A549 (cell line): ENCODE measurements at regions of chr11 and their contacts with region 1.

Region 1: GRCh38 chr11:72722050-72722748 is 30.0 kb downstream of the ARAP1 start:
- DNase-seq: peak; percentile 87 to 97
- ATAC-seq: peak; percentile 95 to 97
- H3K4me3 ChIP-seq: peak overlapping the region; percentile 45
- H3K27ac ChIP-seq: peak overlapping the region; percentile 94 to 97
- H3K4me1 ChIP-seq: peaks cover 35% of the 10 kb centered on the region
- CTCF ChIP-seq: no peak
- EP300 ChIP-seq: no peak
- POLR2A ChIP-seq: peak; percentile 54
- RAD21 ChIP-seq: no peak

Region 2: DNA sequence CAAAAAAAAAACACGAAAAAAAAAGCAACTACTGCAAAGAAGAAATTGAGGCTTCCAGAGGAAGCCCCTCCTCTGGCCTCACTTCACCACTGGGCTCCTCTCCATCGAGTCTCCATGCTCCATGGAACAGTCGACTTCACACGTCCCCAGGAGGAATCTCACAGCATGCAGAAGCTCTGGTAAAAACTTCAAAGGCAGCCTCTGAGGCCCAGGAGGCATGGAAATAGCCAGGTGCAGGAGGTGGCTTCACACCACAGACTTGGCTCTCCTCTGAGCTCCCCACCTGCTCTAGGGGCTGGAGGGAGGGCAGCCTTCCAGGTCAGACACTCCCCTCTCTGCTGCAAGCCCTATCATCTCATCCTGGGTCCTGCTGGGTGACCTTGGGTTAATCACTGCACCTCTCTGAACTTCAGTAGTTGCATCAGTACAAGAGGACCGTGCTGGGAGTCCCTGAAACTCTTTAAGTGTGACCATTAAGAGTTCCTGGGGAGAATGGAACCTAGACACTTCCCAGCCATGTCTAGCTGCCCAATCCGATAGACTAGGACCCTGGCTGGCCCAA is 56.2 kb before region 1 on chr11:
- CTCF ChIA-PET with region 1: no interaction called
- POLR2A ChIA-PET with region 1: no interaction called
- DNase-seq: no peak
- ATAC-seq: no peak
- H3K4me3 ChIP-seq: no peak overlapping the region
- H3K27ac ChIP-seq: no peak overlapping the region
- H3K4me1 ChIP-seq: no peaks in the 10 kb centered on the region
- CTCF ChIP-seq: no peak
- EP300 ChIP-seq: no peak
- POLR2A ChIP-seq: no peak
- RAD21 ChIP-seq: no peak

Region 3: GRCh38 chr11:72683782-72684200 is 38.4 kb before region 1 on chr11:
- CTCF ChIA-PET with region 1: interaction called, 25 read pairs
- POLR2A ChIA-PET with region 1: no interaction called
- DNase-seq: peak; percentile 42 to 85
- ATAC-seq: peak; percentile 57 to 85
- H3K4me3 ChIP-seq: no peak overlapping the region
- H3K27ac ChIP-seq: no peak overlapping the region
- H3K4me1 ChIP-seq: peaks cover 9% of the 10 kb centered on the region; the same call in 2 of the 3 replicates
- CTCF ChIP-seq: peak; percentile 83
- EP300 ChIP-seq: no peak
- POLR2A ChIP-seq: no peak
- RAD21 ChIP-seq: peak; percentile 82 to 87

Region 4: GRCh38 chr11:72758690-72759389 is 36.6 kb after region 1 on chr11:
- CTCF ChIA-PET with region 1: interaction called, 10 read pairs
- POLR2A ChIA-PET with region 1: no interaction called
- DNase-seq: no peak
- ATAC-seq: peak; percentile 31 to 42; a peak in 4 of 6 replicates
- H3K4me3 ChIP-seq: no peak overlapping the region
- H3K27ac ChIP-seq: peak overlapping the region; percentile 9 to 75; a peak in 3 of 6 replicates
- H3K4me1 ChIP-seq: peaks cover 19% of the 10 kb centered on the region
- CTCF ChIP-seq: no peak
- EP300 ChIP-seq: no peak
- POLR2A ChIP-seq: no peak
- RAD21 ChIP-seq: no peak

Region 5: DNA sequence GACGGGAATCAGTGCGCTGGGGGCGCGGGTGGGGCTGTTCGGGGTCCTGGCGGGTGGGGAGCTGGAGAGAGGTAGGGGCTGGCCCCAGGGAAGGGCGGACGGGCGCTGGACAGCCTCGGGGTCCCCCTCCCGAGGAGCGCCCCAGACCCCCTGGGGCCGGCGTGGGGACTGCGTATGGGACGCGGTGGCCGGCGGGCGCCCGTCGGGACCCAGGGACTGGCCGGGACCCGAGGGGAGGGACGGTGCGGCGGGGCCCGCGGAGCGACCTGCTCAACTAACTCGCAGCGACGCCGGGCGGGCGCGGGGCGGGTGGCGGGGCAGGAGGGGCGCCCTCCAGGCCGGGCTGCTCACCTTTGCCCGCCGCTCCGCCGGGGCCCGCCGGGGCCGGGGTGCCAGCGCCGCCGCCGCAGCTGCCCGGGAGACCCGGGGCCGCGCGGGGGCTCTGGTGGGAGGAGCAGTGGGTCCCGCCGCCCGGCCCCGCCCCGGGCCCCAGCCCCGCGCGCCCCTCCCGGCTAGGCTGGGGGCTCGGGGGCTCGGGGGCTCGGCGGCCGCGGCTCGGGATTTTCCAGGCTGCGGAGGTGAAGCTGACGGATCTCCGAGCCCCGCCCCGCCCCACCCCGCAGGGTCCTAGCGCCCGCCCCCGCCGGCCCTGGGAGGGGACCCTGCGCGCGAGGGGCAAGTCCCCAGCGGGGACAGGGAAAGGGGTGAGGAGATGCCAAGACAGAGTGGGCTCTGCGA is 59.3 kb after region 1 on chr11:
- CTCF ChIA-PET with region 1: interaction called, 14 read pairs
- POLR2A ChIA-PET with region 1: no interaction called
- DNase-seq: peak in 1 of 2 experiments; percentile 77
- ATAC-seq: peak; percentile 60 to 63; a peak in 5 of 6 replicates
- H3K4me3 ChIP-seq: peak overlapping the region; percentile 59
- H3K27ac ChIP-seq: peak overlapping the region; percentile 61 to 94
- H3K4me1 ChIP-seq: peaks cover 36% of the 10 kb centered on the region
- CTCF ChIP-seq: no peak
- EP300 ChIP-seq: no peak
- POLR2A ChIP-seq: no peak
- RAD21 ChIP-seq: no peak

Region 6: DNA sequence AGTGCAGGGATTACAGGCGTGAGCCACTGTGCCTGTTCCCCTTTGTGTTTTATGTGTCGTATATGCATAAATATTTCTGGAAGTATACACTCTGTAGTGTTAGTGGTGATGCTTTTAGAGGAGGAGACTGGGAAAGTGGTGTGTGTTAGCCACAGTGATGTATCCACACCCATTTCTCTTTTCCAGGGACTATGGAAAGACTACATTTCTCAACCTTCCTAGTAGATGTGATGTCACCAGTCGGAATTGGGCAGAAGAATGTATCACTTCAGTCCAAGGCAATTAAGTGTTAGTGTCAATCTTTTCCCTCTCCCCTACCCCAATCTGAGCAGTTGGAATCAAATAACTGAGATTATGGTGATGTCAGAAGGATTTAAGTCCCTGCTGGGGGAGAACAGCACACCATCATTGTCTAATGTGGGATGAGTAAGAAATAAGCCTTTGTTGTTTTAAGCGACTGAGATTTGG is 86.2 kb after region 1 on chr11:
- CTCF ChIA-PET with region 1: interaction called, 28 read pairs
- POLR2A ChIA-PET with region 1: interaction called, 10 read pairs
- DNase-seq: no peak
- ATAC-seq: no peak
- H3K4me3 ChIP-seq: no peak overlapping the region
- H3K27ac ChIP-seq: peak overlapping the region; percentile 80 to 89
- H3K4me1 ChIP-seq: peaks cover 45% of the 10 kb centered on the region
- CTCF ChIP-seq: no peak
- EP300 ChIP-seq: no peak
- POLR2A ChIP-seq: no peak
- RAD21 ChIP-seq: no peak

Region 7: GRCh38 chr11:72831513-72832300 is 109.5 kb after region 1 on chr11:
- CTCF ChIA-PET with region 1: interaction called, 58 read pairs
- POLR2A ChIA-PET with region 1: no interaction called
- DNase-seq: peak; percentile 74 to 77
- ATAC-seq: peak; percentile 93 to 96
- H3K4me3 ChIP-seq: no peak overlapping the region
- H3K27ac ChIP-seq: peak overlapping the region; percentile 32 to 75; a peak in 4 of 6 replicates
- H3K4me1 ChIP-seq: peaks cover 4% of the 10 kb centered on the region; the same call in 2 of the 3 replicates
- CTCF ChIP-seq: peak; percentile 90
- EP300 ChIP-seq: no peak
- POLR2A ChIP-seq: no peak
- RAD21 ChIP-seq: peak; percentile 95 to 97

Region 8: DNA sequence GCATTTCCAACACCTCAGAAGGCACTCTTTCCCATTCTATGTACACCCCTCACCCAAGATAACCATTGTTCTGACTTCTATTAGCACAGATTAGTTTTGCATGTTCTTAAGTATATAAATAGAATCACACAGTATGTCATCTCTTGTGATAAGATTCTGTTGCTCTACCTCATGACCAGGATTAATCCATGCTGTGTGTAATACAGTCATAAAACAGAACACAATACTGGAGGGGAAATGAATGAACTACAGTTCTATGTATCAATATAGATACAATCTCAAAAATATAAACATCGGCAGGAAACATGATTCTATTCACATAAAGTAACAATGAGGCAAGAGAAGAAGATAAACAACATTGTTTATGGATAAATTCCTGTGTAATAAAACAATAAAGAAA is 243.5 kb after region 1 on chr11:
- CTCF ChIA-PET with region 1: no interaction called
- POLR2A ChIA-PET with region 1: no interaction called
- DNase-seq: no peak
- ATAC-seq: no peak
- H3K4me3 ChIP-seq: no peak overlapping the region
- H3K27ac ChIP-seq: no peak overlapping the region
- H3K4me1 ChIP-seq: peaks cover 15% of the 10 kb centered on the region; the same call in 2 of the 3 replicates
- CTCF ChIP-seq: no peak
- EP300 ChIP-seq: no peak
- POLR2A ChIP-seq: no peak
- RAD21 ChIP-seq: no peak